PC-9 (cell line): ENCODE measurements at regions of chr12 and their contacts with region 1.

Region 1: GRCh38 chr12:57111031-57111734 is at the start of gene STAT6:
- DNase-seq: peak; percentile 59 to 75
- H3K4me3 ChIP-seq: peak within 1 kb of the TSS; percentile 81
- H3K27ac ChIP-seq: peak within 1 kb of the TSS; percentile 87
- H3K4me1 ChIP-seq: peaks cover 25% of the 10 kb centered on the region
- H3K27me3 ChIP-seq: no peaks in the 10 kb centered on the region
- CTCF ChIP-seq: no peak; the same call in 1 of the 2 replicates
- total RNA-seq, gene STAT6: 112 and 122 TPM in 2 replicates

Region 2: DNA sequence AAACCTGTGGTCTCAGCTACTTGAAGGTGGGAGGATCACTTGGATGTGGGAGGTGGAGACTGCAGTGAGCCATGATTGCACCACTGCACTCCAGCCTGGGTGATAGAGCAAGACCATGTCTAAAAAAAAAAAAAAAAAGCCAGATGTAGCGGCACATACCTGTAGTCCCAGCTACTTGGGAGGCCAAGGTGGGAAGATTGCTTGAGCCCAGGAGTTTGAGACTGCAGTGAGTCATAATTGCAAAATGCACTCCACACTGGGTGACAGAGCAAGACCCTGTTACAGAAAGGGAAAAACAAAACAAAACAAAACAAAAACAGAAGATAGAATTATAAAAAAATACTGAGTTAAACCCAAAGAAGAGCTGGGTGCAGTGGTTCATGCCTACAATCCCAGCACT is 719.5 kb before region 1 on chr12:
- CTCF ChIA-PET with region 1: no interaction called
- POLR2A ChIA-PET with region 1: no interaction called
- intact Hi-C with region 1: no loop called
- DNase-seq: no peak
- H3K4me3 ChIP-seq: no peak overlapping the region
- H3K27ac ChIP-seq: no peak overlapping the region
- H3K4me1 ChIP-seq: 0 out of 2 replicates have a peak, but pooled peaks cover 3% of the 10 kb centered on the region
- H3K27me3 ChIP-seq: no peaks in the 10 kb centered on the region
- CTCF ChIP-seq: no peak

Region 3: GRCh38 chr12:56636675-56637540 is 474.3 kb before region 1 on chr12:
- CTCF ChIA-PET with region 1: interaction called, 3 read pairs
- POLR2A ChIA-PET with region 1: interaction called, 32 read pairs
- intact Hi-C with region 1: no loop called
- DNase-seq: peak; percentile 98 to 99
- H3K4me3 ChIP-seq: peak overlapping the region; percentile 91
- H3K27ac ChIP-seq: peak overlapping the region; percentile 58
- H3K4me1 ChIP-seq: peaks cover 25% of the 10 kb centered on the region
- H3K27me3 ChIP-seq: no peaks in the 10 kb centered on the region
- CTCF ChIP-seq: peak; percentile 71

Region 4: GRCh38 chr12:57005980-57006808 is 105.0 kb before region 1 on chr12 and contains the start of gene ZBTB39:
- CTCF ChIA-PET with region 1: interaction called, 7 read pairs
- POLR2A ChIA-PET with region 1: no interaction called
- intact Hi-C with region 1: loop called (anchors 1 kb)
- DNase-seq: peak in 1 of 2 experiments; percentile 70
- H3K4me3 ChIP-seq: peak within 1 kb of the TSS; percentile 62
- H3K27ac ChIP-seq: no peak within 1 kb of the TSS
- H3K4me1 ChIP-seq: peaks cover 11% of the 10 kb centered on the region
- H3K27me3 ChIP-seq: no peaks in the 10 kb centered on the region
- CTCF ChIP-seq: peak; percentile 68; the same call in 1 of the 2 replicates
- total RNA-seq, gene ZBTB39: 6.5 and 7.6 TPM in 2 replicates

Region 5: GRCh38 chr12:57078519-57079404 is 32.4 kb before region 1 on chr12 and contains the start of gene NEMP1:
- CTCF ChIA-PET with region 1: interaction called, 23 read pairs
- POLR2A ChIA-PET with region 1: interaction called, 11 read pairs
- intact Hi-C with region 1: loop called (anchors 2 kb)
- DNase-seq: peak; percentile 96 to 100
- H3K4me3 ChIP-seq: peak within 1 kb of the TSS; percentile 90
- H3K27ac ChIP-seq: peak within 1 kb of the TSS; percentile 59
- H3K4me1 ChIP-seq: peaks cover 13% of the 10 kb centered on the region
- H3K27me3 ChIP-seq: no peaks in the 10 kb centered on the region
- CTCF ChIP-seq: no peak
- total RNA-seq, gene NEMP1: 28.9 and 36.6 TPM in 2 replicates

Region 6: GRCh38 chr12:57124259-57124877 is 13.2 kb after region 1 on chr12:
- CTCF ChIA-PET with region 1: interaction called, 22 read pairs
- POLR2A ChIA-PET with region 1: interaction called, 19 read pairs
- intact Hi-C with region 1: no loop called
- DNase-seq: peak; percentile 51 to 62
- H3K4me3 ChIP-seq: no peak overlapping the region
- H3K27ac ChIP-seq: no peak overlapping the region
- H3K4me1 ChIP-seq: peaks cover 8% of the 10 kb centered on the region
- H3K27me3 ChIP-seq: no peaks in the 10 kb centered on the region
- CTCF ChIP-seq: peak; percentile 95

Region 7: DNA sequence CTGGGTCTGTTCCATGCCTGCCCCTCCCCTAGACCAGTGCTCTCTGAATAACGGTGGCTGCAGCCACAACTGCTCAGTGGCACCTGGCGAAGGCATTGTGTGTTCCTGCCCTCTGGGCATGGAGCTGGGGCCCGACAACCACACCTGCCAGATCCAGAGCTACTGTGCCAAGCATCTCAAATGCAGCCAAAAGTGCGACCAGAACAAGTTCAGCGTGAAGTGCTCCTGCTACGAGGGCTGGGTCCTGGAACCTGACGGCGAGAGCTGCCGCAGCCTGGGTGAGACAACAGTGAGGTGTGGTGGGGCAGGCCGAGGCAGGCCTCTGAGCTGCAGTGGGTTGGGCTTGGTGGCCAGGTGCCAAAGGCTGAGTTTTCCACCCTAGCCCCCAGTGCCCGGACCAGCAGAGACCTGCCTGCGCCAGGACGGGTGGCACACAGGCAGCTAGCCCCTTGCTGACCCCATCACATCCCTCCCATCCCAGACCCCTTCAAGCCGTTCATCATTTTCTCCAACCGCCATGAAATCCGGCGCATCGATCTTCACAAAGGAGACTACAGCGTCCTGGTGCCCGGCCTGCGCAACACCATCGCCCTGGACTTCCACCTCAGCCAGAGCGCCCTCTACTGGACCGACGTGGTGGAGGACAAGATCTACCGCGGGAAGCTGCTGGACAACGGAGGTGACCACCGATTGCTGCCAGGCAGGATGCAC is 64.4 kb after region 1 on chr12:
- CTCF ChIA-PET with region 1: interaction called, 10 read pairs
- POLR2A ChIA-PET with region 1: interaction called, 18 read pairs
- intact Hi-C with region 1: no loop called
- DNase-seq: peak; percentile 60 to 89
- H3K4me3 ChIP-seq: no peak overlapping the region
- H3K27ac ChIP-seq: no peak overlapping the region
- H3K4me1 ChIP-seq: peaks cover 15% of the 10 kb centered on the region
- H3K27me3 ChIP-seq: no peaks in the 10 kb centered on the region
- CTCF ChIP-seq: peak; percentile 81

Region 8: DNA sequence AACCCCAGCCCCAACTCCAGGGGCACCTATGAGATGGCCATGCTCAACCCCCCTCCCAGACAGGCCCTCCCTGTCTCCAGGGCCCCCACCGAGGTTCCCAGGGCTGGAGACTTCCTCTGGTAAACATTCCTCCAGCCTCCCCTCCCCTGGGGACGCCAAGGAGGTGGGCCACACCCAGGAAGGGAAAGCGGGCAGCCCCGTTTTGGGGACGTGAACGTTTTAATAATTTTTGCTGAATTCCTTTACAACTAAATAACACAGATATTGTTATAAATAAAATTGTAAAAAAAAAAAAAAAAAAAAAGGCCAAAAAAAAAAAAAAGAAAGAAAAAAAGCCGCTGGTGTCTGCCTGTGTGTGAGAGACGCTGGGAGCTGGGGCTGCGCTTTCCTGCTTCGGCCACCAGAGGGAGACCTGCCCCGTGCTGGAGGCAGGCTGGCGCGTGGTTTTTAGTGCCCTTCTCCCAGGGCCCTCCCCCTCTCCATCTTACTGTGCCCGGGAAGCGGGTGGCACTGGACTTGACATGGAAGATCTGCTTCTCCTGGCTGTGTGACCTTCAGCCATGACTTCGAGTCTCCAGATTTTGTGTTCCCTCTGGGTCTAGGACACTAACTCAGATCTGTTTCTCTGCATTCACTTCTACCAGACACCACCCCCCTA is 102.0 kb after region 1 on chr12:
- CTCF ChIA-PET with region 1: interaction called, 9 read pairs
- POLR2A ChIA-PET with region 1: interaction called, 20 read pairs
- intact Hi-C with region 1: no loop called
- DNase-seq: peak; percentile 69 to 92
- H3K4me3 ChIP-seq: peak overlapping the region; percentile 36; the same call in 1 of the 2 replicates
- H3K27ac ChIP-seq: peak overlapping the region; percentile 60
- H3K4me1 ChIP-seq: peaks cover 17% of the 10 kb centered on the region
- H3K27me3 ChIP-seq: no peaks in the 10 kb centered on the region
- CTCF ChIP-seq: peak; percentile 92